Motor neuron (in vitro differentiated cells): ENCODE measurements at regions of chr11 and their contacts with region 1.

Region 1: GRCh38 chr11:64652586-64653387 is 61.8 kb downstream of the SLC22A12 start:
- ATAC-seq: peak; percentile 73 to 95 (median 87)
- H3K4me3 ChIP-seq: no peak overlapping the region
- H3K27ac ChIP-seq: no peak overlapping the region
- H3K4me1 ChIP-seq: peaks cover 14 to 15% of the 10 kb centered on the region in 2 donors

Region 2: GRCh38 chr11:64449557-64450167 is 203.1 kb before region 1 on chr11:
- in situ Hi-C with region 1: loop called in 1 of 9 experiments (anchors 10 kb)
- ATAC-seq: peak; percentile 59 to 86 (median 73)
- H3K4me3 ChIP-seq: peak overlapping the region in 2 of 5 donors; percentile 8 to 13
- H3K27ac ChIP-seq: peak overlapping the region in 1 of 2 donors; percentile 64
- H3K4me1 ChIP-seq: peaks cover 10 to 16% of the 10 kb centered on the region in 2 donors

Region 3: DNA sequence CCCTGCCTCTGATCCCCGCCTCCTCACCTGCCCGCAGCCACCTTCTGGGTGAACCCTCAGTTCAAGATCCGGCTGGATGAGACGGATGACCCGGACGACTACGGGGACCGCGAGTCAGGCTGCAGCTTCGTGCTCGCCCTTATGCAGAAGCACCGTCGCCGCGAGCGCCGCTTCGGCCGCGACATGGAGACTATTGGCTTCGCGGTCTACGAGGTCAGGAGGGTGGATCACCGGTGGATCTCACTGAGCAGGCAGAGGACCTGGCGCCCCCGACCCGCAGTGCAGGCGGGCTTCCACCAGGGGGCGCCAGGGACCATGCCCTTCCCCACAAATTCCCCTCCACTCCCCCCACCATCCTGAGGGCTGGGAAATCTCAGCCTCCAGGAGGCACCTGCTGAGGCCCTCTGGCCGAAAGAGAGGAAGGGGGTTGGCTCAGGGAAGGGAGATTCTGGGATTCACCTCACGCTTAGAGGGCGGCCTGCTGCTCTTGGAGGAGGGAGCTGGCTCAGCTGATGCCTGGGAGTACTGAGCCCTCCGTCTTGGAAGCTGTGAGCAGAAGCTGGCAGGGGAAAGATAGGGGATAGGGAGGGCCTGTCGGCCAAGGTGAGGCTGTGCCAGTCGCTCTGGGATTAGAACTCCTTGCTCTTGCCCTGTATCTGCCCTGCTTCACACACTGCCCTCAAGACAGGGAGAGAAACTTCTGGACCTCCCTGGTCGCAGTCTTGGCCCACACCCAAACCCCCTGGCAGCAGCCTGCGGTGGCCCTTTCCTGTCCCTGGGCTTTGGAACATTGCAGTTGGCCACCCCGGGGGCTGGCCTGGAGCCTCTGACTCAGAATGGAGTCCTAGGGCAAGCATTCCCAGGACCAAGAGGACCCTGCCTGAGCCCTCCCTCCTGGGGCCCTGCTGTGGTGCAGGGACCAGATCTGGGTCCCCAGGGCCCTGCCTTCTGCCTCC is 552.1 kb after region 1 on chr11:
- in situ Hi-C with region 1: no loop called
- ATAC-seq: peak in 6 of 8 experiments; percentile 15 to 92 (median 44)
- H3K4me3 ChIP-seq: no peak overlapping the region
- H3K27ac ChIP-seq: no peak overlapping the region
- H3K4me1 ChIP-seq: no peaks in the 10 kb centered on the region